MCF 10A (cell line): ENCODE measurements at regions of chr10 and their contacts with region 1.

Region 1: DNA sequence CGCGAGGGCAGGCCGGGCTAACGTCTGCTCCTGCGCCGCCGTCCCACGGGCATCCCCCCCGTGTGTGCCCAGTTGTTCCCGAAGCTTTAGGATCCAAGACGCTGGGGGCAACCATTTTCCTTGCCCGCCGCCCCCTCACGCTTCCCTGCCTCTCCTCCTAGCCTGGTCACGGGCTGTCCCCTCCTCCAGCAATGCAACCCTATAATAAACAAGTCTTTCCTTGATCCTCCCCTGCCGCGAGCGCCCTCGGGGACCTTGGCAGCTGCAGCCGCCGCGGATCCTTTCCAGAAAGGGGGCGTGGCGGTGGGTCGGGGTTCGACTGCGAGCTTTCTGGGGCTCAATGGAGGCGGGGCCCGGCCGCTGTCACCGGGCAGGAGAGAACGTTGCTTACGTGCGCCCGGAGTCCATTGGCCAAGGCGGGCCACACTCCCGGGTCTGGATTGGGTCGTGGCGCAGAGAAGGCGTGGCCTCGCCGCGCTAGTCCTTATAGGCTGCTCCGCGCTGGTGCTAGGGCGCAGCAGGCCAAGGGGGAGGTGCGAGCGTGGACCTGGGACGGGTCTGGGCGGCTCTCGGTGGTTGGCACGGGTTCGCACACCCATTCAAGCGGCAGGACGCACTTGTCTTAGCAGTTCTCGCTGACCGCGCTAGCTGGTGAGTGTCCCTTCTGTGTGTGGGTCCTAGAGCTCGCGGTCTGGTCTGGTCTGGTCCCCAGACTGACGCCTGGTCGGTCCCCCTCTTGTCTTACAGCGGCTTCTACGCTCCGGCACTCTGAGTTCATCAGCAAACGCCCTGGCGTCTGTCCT is at the start of gene DDIT4:
- DNase-seq: peak; percentile 99
- H3K4me3 Mint-ChIP-seq: peak within 1 kb of the TSS; percentile 81
- H3K27ac Mint-ChIP-seq: peak within 1 kb of the TSS; percentile 92
- H3K4me1 Mint-ChIP-seq: peaks cover 38% of the 10 kb centered on the region
- H3K27me3 Mint-ChIP-seq: no peaks in the 10 kb centered on the region
- CTCF ChIP-seq: no peak
- total RNA-seq, gene DDIT4: 698 and 872 TPM in 2 replicates

Region 2: GRCh38 chr10:72048450-72049124 is 225.0 kb before region 1 on chr10:
- CTCF ChIA-PET with region 1: interaction called, 4 read pairs
- POLR2A ChIA-PET with region 1: interaction called, 5 read pairs
- intact Hi-C with region 1: loop called (anchors 2 kb)
- DNase-seq: peak; percentile 93
- H3K4me3 Mint-ChIP-seq: no peak overlapping the region
- H3K27ac Mint-ChIP-seq: peak overlapping the region; percentile 63
- H3K4me1 Mint-ChIP-seq: peaks cover 15% of the 10 kb centered on the region
- H3K27me3 Mint-ChIP-seq: no peaks in the 10 kb centered on the region
- CTCF ChIP-seq: peak; percentile 98

Region 3: GRCh38 chr10:72223743-72224101 is 49.9 kb before region 1 on chr10:
- CTCF ChIA-PET with region 1: interaction called, 7 read pairs
- POLR2A ChIA-PET with region 1: interaction called, 56 read pairs
- intact Hi-C with region 1: no loop called
- DNase-seq: no peak
- H3K4me3 Mint-ChIP-seq: no peak overlapping the region
- H3K27ac Mint-ChIP-seq: peak overlapping the region; percentile 23
- H3K4me1 Mint-ChIP-seq: peaks cover 12% of the 10 kb centered on the region
- H3K27me3 Mint-ChIP-seq: no peaks in the 10 kb centered on the region
- CTCF ChIP-seq: no peak

Region 4: DNA sequence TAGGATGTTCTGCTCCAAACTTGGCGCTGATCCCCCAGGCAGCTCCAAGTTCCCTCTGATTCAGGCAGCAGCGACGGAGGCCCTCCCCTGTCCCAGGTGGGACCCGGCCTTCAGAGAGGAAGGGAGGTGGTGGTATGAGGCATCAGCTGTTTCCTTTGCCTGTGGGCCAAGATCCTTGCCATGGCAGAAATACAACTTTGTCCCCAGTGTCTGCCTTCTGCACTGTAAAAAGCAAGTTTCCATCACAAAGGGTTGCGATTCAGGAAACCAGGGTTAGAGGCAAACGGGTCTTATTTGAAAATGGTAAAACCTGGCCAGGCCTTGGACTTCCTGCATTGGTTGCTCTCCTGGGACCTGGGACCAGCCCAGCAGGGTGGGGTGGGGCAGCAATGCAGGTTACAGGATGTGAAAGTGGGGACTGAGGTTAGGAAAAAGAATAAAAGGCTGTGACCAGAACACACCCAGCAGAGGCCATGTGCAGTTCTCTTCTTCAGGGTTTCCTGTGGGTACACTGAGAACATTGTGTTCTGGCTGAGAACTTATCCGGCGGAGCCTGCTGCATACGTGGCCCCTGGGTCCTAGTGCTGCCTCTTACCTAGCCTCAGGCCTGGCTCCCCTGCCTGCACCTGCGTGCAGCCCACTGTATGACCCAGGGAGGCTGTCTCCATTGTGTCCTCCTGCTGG is 25.0 kb before region 1 on chr10:
- CTCF ChIA-PET with region 1: interaction called, 23 read pairs
- POLR2A ChIA-PET with region 1: interaction called, 902 read pairs
- intact Hi-C with region 1: loop called (anchors 1 kb)
- DNase-seq: peak; percentile 96
- H3K4me3 Mint-ChIP-seq: peak overlapping the region; percentile 49
- H3K27ac Mint-ChIP-seq: peak overlapping the region; percentile 88
- H3K4me1 Mint-ChIP-seq: peaks cover 59% of the 10 kb centered on the region
- H3K27me3 Mint-ChIP-seq: no peaks in the 10 kb centered on the region
- CTCF ChIP-seq: no peak

Region 5: DNA sequence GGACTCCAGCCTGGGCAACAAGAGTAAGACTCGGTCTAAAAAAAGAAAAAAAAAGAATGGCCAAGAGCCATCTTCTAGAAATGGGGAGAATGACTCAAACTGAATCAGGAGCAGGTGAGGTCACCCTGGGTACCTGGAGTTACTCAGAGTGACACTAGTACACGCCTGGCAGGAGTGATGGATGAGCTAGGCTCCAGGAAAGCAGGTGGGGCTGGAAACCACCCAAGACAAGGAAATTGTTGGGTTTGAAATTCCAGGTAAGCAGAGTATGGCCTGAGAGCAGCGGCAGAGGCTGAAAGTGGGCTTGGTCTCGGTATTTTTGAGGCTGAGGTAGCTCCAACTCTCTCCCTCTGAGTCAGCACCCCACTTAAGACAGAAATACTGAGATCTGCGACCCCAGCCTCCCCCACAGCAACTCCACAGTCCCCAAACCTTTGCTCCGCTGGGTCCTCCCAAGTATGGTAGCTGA is 18.6 kb after region 1 on chr10:
- CTCF ChIA-PET with region 1: interaction called, 9 read pairs
- POLR2A ChIA-PET with region 1: interaction called, 125 read pairs
- intact Hi-C with region 1: loop called (anchors 1 kb)
- DNase-seq: peak; percentile 96
- H3K4me3 Mint-ChIP-seq: no peak overlapping the region
- H3K27ac Mint-ChIP-seq: peak overlapping the region; percentile 57
- H3K4me1 Mint-ChIP-seq: peaks cover 18% of the 10 kb centered on the region
- H3K27me3 Mint-ChIP-seq: no peaks in the 10 kb centered on the region
- CTCF ChIP-seq: no peak

Region 6: DNA sequence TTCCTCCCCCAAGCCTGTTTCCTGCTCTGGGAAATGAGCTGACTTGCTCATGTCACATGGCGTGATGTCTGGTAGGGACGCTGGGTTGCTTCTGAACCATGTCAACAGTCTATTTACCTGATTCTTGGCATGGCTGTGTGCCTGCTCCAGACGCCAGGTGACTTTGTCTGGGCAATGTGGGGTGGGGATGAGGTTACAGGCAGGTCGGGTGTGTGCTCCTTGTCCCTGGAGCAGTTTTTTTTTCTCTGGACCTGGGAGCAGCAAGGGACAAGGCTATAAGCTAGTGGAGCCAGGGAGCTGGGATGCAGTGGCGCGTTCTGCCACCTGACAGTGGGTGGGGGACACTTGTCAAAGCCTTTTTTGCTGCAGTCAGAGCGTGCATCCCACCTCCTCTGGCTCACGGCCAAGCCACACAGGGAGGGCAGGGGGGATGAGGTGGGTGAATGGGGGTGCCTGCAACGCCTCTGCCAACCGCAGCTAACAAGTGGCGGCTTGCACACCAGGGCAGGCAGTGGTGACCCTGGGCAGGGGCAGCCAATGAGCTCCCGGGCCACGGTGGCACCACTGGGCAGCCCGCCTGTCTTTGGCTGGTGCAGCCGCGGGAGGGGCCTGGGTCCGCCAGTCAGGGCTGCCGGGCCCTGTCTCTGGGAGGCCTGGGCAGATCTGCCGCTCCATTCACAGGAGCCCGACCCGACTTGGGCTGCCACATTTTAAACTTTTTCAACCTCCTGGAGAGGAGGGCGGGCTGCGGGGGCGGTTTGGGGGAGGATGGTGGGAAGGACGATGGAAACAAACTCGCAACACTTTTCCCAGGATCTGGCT is 58.2 kb after region 1 on chr10:
- CTCF ChIA-PET with region 1: interaction called, 68 read pairs
- POLR2A ChIA-PET with region 1: interaction called, 399 read pairs
- intact Hi-C with region 1: loop called (anchors 1 kb)
- DNase-seq: peak; percentile 99
- H3K4me3 Mint-ChIP-seq: peak overlapping the region; percentile 25
- H3K27ac Mint-ChIP-seq: peak overlapping the region; percentile 92
- H3K4me1 Mint-ChIP-seq: peaks cover 61% of the 10 kb centered on the region
- H3K27me3 Mint-ChIP-seq: no peaks in the 10 kb centered on the region
- CTCF ChIP-seq: no peak

Region 7: GRCh38 chr10:72503241-72503640 is 229.6 kb after region 1 on chr10:
- CTCF ChIA-PET with region 1: no interaction called
- POLR2A ChIA-PET with region 1: no interaction called
- intact Hi-C with region 1: no loop called
- DNase-seq: peak; percentile 13
- H3K4me3 Mint-ChIP-seq: no peak overlapping the region
- H3K27ac Mint-ChIP-seq: no peak overlapping the region
- H3K4me1 Mint-ChIP-seq: no peaks in the 10 kb centered on the region
- H3K27me3 Mint-ChIP-seq: no peaks in the 10 kb centered on the region
- CTCF ChIP-seq: no peak

Region 8: DNA sequence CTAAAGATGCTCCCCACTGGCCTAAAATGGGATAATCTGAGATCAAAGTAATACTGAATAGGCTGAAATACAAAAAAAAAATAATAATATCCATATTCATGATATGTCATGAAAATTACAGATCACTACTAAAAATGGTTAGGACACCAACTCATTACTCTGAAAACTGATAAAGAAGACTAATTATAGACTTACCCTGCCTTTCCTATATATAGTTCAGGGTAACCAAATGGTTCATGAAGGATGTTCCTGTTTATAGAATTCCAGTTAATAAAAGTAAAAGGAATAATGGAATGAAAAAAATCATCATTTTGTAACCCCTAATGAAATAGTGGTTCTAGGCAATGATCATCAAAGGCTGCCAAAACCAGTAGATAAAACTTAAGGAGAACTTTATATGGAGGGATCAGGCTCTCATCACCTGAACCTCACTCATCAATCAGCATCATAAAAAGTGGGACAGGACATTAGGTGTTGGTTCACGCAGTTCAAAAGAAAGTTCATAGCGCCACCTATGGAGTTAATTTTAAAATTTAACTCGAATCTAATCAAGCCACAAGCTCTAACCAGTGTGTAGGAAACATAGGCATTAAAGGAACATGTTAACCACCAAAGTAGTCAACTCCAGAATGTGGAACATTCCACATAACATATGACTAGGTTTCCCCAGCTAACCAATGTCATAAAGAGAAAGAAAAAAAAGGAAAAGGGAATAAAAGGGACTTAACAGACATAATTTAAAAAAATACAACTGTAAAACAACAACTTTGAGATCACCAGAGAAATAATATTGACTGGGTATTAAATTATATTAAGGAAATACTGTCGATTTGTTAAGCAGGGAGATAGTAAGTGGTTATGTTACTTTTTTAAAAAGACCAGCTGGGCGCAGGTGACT is 787.4 kb after region 1 on chr10:
- CTCF ChIA-PET with region 1: no interaction called
- POLR2A ChIA-PET with region 1: no interaction called
- intact Hi-C with region 1: no loop called
- DNase-seq: peak; percentile 65
- H3K4me3 Mint-ChIP-seq: no peak overlapping the region
- H3K27ac Mint-ChIP-seq: no peak overlapping the region
- H3K4me1 Mint-ChIP-seq: peaks cover 5% of the 10 kb centered on the region
- H3K27me3 Mint-ChIP-seq: no peaks in the 10 kb centered on the region
- CTCF ChIP-seq: peak; percentile 53